ENCODE measurements at regions of chr14 and their contacts with region 1.

Region 1: DNA sequence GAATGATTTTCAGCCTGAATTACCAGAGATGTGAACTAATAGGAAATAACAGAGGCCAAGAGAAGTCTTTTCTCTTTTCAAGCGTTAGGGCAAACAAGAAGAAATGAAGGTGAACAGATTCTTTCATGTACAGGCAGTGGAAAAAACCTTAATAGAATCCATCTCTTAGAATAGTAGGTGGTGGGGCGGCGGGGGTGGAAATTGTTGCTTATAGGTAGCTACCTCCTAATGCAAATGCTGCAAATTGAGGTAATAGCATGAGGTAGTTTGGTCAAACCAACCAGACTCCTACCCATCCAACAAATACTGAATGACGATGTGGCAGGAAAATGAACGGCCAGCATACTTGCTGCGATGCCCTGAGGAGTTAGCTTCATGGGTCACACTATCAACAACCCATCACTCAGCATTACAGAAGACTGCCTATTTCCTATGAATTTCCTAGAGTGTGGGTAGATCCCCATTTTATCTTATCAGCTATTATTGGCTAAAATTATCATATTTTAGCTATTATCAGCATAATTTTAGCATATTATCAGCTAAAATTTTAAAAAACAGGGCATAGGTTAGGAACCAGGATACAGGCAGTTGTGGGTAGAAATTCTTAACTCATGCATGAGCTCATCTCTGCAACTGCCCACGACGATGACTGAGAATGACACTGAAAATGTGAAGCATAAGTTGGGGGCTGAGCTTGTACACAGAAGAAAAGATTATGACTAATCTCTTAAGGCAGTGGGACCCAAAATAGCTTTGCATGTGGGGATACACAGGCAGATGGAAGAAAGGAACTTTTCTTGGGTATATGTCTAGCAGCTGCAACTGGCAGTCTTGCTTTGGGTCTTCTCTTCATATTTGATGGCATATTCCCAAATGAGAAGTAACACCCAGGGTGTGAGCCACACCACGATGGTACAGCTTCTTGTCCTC is 68.7 kb downstream of the NIN start:
- DNase-seq: peak; percentile 64
- H3K4me3 ChIP-seq: no peak overlapping the region
- CTCF ChIP-seq: no peak

Region 2: GRCh38 chr14:50667996-50668825 is 94.1 kb before region 1 on chr14 and contains the start of gene SAV1:
- CTCF ChIA-PET with region 1: no interaction called
- POLR2A ChIA-PET with region 1: interaction called, 10 read pairs
- DNase-seq: peak; percentile 66
- H3K4me3 ChIP-seq: peak within 1 kb of the TSS; percentile 78
- CTCF ChIP-seq: no peak

Region 3: DNA sequence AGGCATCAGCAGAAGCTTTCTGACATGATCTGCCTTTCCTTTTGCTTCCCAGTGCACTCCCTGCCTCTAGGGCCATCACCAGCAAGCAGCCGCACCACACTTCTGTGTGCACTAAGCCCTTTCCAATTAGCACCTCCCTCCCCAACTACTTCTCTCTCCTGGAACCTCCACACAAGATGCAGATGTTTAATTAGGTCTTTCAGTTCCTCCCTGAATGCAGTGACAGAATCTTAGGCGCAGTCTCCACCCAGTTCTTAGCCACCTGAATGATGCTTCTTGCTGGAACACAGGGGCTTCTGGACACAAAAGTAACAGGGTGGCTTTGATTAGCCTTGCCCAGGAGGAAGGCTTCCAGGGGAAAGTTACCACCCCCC is 35.8 kb after region 1 on chr14:
- CTCF ChIA-PET with region 1: no interaction called
- POLR2A ChIA-PET with region 1: no interaction called
- DNase-seq: no peak
- H3K4me3 ChIP-seq: no peak overlapping the region
- CTCF ChIP-seq: no peak

Measured in AG04449 (cell line).